Natural killer cell (primary cell): ENCODE measurements at regions of chr11 and their contacts with region 1.

Region 1: DNA sequence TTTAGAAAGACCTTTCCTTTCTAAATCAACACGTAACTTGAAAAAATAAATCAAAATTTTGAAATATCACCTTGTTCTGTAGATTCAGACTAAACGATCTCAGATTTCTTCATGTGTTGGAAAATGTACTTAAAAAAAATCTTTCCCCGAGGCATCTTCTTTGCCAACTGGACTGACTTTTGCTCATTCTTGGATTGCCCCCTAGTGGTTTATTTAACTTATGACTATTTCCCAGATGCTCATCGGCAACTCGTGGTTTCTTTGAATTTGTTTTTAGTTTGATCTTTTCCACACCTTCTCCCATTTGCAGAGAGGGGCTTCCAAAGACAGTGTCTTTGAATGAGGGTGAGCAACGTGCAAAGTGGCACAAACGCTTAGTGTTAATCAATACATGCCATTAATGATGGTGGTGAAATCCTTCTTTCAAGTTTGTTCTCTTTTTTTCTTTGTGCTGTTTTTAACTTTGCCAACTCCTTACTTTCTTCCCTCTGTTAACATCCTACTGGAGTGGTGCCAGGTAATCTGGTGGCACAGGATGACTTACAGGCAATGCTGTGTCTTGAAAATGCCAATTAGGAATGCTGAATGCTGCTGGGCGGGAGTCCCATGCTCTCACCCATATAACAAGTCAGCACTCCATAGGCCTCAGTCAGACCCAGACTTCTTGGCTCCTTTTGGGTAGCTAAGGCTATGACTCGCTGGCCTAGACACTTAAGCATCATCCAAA is 18.3 kb downstream of the PRSS23 start:
- DNase-seq: peak in 1 of 2 donors; percentile 69
- ATAC-seq: peak; percentile 48 to 77 (median 77)
- H3K4me3 ChIP-seq: no peak overlapping the region
- H3K4me3 Mint-ChIP-seq: no peak overlapping the region
- H3K27ac ChIP-seq: no peak overlapping the region
- H3K27ac Mint-ChIP-seq: no peak overlapping the region
- H3K4me1 ChIP-seq: no peaks in the 10 kb centered on the region
- H3K4me1 Mint-ChIP-seq: peaks cover 35 to 38% of the 10 kb centered on the region in 2 donors
- H3K27me3 ChIP-seq: no peaks in the 10 kb centered on the region
- H3K27me3 Mint-ChIP-seq: no peaks in the 10 kb centered on the region
- CTCF ChIP-seq: peak; percentile 91

Region 2: GRCh38 chr11:86608251-86608799 is 210.3 kb before region 1 on chr11:
- intact Hi-C with region 1: loop called (anchors 1 kb)
- DNase-seq: peak; percentile 31 to 61
- ATAC-seq: peak; percentile 85 to 94 (median 93)
- H3K4me3 ChIP-seq: no peak overlapping the region
- H3K4me3 Mint-ChIP-seq: peak overlapping the region; percentile 0
- H3K27ac ChIP-seq: no peak overlapping the region
- H3K27ac Mint-ChIP-seq: no peak overlapping the region
- H3K4me1 ChIP-seq: no peaks in the 10 kb centered on the region
- H3K4me1 Mint-ChIP-seq: peaks cover 12 to 13% of the 10 kb centered on the region in 2 donors
- H3K27me3 ChIP-seq: no peaks in the 10 kb centered on the region
- H3K27me3 Mint-ChIP-seq: peaks cover 0 to 9% of the 10 kb centered on the region in 2 donors
- CTCF ChIP-seq: peak; percentile 99

Region 3: DNA sequence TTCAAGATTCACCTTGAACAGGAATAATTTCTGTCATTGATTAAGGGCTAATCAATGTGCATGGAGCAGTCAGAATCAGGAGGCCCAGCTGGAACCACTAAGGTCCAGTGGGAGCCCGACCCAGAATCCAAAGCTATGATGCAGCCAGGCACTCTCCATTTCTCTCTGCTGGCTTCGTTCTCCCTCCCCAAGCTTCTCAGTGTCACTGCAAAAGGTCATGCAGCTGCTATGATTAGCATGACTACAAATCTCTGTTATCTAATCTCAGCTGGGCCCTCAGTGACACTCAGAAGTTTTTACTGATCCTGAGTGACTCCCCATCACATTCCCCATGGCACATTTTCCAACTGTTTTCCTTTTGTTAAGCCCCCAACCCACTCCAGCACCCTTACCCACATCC is 49.4 kb before region 1 on chr11:
- intact Hi-C with region 1: no loop called
- DNase-seq: no peak
- ATAC-seq: no peak
- H3K4me3 ChIP-seq: no peak overlapping the region
- H3K4me3 Mint-ChIP-seq: no peak overlapping the region
- H3K27ac ChIP-seq: no peak overlapping the region
- H3K27ac Mint-ChIP-seq: no peak overlapping the region
- H3K4me1 ChIP-seq: no peaks in the 10 kb centered on the region
- H3K4me1 Mint-ChIP-seq: no peaks in the 10 kb centered on the region
- H3K27me3 ChIP-seq: no peaks in the 10 kb centered on the region
- H3K27me3 Mint-ChIP-seq: peaks cover 5 to 18% of the 10 kb centered on the region in 2 donors
- CTCF ChIP-seq: no peak

Region 4: DNA sequence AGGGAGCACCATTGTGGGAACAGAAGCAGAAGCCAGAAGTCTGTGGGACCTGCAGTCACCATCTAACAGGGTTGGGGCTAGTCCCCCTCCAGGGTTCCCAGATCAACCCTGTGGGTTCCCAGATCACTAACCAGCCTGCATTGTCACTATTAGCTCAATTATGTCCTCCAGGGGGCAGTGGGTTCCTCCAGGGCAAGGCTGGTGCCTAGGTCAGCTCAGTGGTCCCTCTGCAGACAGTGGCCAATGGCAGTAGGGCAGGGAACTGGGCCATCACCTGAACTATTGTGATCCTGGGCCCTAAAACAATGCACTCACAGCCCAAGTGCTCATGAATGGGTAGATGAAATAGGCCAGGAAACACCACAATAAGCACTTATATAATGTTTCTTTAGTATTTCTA is 37.1 kb before region 1 on chr11:
- intact Hi-C with region 1: loop called (anchors 1 kb)
- DNase-seq: peak in 1 of 2 donors; percentile 9
- ATAC-seq: peak; percentile 43 to 73 (median 52)
- H3K4me3 ChIP-seq: no peak overlapping the region
- H3K4me3 Mint-ChIP-seq: no peak overlapping the region
- H3K27ac ChIP-seq: no peak overlapping the region
- H3K27ac Mint-ChIP-seq: no peak overlapping the region
- H3K4me1 ChIP-seq: no peaks in the 10 kb centered on the region
- H3K4me1 Mint-ChIP-seq: no peaks in the 10 kb centered on the region
- H3K27me3 ChIP-seq: no peaks in the 10 kb centered on the region
- H3K27me3 Mint-ChIP-seq: peaks cover 11 to 30% of the 10 kb centered on the region in 2 donors
- CTCF ChIP-seq: peak; percentile 22

Region 5: DNA sequence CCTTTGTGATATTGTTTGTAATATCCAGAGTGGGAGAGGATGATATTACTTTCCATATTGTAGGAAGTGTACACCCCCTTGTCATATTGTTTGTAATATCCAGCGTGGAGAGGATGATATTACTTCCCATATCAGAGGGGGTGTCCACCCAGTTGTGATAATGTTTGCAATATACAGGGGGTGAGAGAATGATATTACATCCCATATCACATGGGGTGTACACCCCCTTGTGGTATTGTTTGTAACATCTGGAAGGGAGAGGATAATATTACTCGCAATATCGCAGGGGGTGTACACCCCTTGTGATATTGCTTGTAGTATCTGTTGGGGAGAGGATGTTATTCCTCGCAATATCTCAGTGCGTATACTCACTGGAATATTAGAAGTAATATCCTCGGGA is 43.2 kb after region 1 on chr11:
- intact Hi-C with region 1: no loop called
- DNase-seq: no peak
- ATAC-seq: no peak
- H3K4me3 ChIP-seq: no peak overlapping the region
- H3K4me3 Mint-ChIP-seq: no peak overlapping the region
- H3K27ac ChIP-seq: no peak overlapping the region
- H3K27ac Mint-ChIP-seq: no peak overlapping the region
- H3K4me1 ChIP-seq: no peaks in the 10 kb centered on the region
- H3K4me1 Mint-ChIP-seq: no peaks in the 10 kb centered on the region
- H3K27me3 ChIP-seq: no peaks in the 10 kb centered on the region
- H3K27me3 Mint-ChIP-seq: peaks cover 7 to 11% of the 10 kb centered on the region in 2 donors
- CTCF ChIP-seq: no peak